RWPE1 (cell line): ENCODE measurements at regions of chr20 and their contacts with region 1.

Region 1: DNA sequence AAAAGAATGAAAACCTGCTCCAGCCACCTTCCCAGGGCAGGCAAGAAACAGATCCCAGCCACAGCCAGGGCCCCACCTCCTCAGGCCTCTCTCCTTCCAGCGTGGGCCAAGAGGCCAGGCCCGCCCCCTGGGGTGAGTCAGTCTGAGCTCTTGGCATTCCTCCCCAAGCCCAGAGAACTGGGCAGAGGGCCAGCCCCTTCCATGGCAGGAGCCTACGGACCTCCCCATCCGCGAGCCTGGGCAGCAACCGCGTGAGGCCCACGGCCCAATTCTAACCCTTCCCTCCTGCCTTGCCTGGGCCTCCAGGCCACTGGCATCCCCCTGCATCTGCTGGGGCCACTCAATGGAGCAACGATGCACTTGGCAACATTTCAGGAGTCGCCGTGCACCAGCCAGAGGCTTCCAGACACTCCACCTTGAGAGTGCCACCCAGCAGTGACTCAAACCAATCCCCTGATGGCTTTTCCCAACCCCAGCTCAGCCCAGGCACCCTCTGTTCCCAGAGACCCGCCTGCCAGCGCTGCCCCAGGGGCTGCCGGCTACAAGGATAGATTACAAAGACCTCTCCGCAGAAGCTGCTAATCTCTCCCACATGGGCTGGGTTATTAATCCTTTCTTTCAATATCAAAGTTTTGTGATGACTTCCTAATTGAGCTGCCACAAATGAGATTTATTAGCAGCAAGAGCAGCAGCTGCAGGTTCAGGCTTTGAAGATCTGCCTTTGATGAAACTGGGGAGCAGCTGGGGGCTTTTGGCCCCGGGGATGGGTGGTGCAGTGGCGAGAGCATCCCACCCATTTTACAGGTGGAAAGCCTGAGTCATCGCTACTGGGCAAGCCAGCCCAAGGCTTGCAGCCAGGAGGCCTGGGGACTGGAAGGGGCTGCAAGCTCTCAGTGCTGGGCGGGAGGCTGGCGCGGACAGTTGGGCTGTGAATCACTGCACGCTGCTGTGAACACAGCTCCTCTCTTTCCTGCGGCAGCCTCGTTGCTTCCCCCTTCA is 85.7 kb downstream of the NFATC2 start:
- DNase-seq: peak; percentile 98
- H3K27ac ChIP-seq: peak overlapping the region; percentile 95
- CTCF ChIP-seq: no peak

Region 2: GRCh38 chr20:51978081-51978501 is 521.3 kb after region 1 on chr20:
- CTCF ChIA-PET with region 1: no interaction called
- POLR2A ChIA-PET with region 1: interaction called, 11 read pairs
- DNase-seq: no peak
- H3K27ac ChIP-seq: no peak overlapping the region
- CTCF ChIP-seq: no peak